Caco-2 (cell line): ENCODE measurements at regions of chr2 and their contacts with region 1.

Region 1: GRCh38 chr2:26577434-26578112 is 63.6 kb downstream of the CIB4 start:
- DNase-seq: peak; percentile 61 to 80
- H3K4me3 ChIP-seq: no peak overlapping the region
- H3K4me3 Mint-ChIP-seq: no peak overlapping the region
- H3K27ac Mint-ChIP-seq: no peak overlapping the region
- H3K4me1 ChIP-seq: peaks cover 9% of the 10 kb centered on the region; the same call in 1 of the 2 replicates
- H3K4me1 Mint-ChIP-seq: no peaks in the 10 kb centered on the region
- H3K27me3 ChIP-seq: no peaks in the 10 kb centered on the region
- H3K27me3 Mint-ChIP-seq: peaks cover 20% of the 10 kb centered on the region
- CTCF ChIP-seq: peak; percentile 98

Region 2: DNA sequence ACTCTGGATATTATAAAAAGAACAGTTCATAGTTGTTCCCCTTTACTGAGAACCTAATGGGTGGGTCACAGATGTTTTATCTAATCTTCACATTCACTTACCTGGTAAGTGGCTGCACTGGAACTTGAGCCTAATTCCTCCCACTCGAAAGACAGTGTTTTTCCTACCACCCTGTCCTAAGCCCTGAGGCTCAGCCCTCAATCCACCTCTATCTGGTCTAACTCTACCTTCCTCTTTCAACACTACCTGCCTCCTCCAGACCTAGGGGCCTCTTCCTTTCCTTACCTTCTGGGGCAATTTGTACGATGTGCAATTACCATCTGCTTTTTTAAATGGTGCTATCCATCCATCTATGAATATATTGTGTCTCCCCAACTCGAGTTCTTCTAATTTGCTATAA is 585.6 kb before region 1 on chr2:
- CTCF ChIA-PET with region 1: no interaction called
- POLR2A ChIA-PET with region 1: no interaction called
- intact Hi-C with region 1: no loop called
- DNase-seq: no peak
- H3K4me3 ChIP-seq: no peak overlapping the region
- H3K4me3 Mint-ChIP-seq: no peak overlapping the region
- H3K27ac Mint-ChIP-seq: peak overlapping the region; percentile 5
- H3K4me1 ChIP-seq: peaks cover 12% of the 10 kb centered on the region
- H3K4me1 Mint-ChIP-seq: peaks cover 23% of the 10 kb centered on the region
- H3K27me3 ChIP-seq: no peaks in the 10 kb centered on the region
- H3K27me3 Mint-ChIP-seq: no peaks in the 10 kb centered on the region
- CTCF ChIP-seq: no peak

Region 3: DNA sequence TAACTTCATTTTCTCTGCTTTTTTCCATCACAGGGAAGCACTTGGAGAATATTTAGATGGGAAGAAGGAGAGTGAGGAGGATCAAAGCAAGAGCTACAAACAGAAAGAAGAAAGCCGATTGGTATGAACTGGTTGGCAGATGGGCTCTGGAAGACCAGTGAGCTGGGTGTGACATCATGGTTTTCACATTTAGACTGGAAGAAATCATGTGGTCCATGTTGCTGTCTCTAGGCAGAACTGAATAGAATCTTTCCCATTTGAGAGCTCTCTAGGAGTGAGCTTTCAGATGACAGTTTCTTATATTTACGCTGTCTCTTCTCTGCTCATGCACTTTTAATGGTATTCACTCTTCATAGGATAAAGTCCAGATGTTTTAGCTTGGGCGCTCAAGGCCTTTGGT is 163.3 kb before region 1 on chr2:
- CTCF ChIA-PET with region 1: no interaction called
- POLR2A ChIA-PET with region 1: no interaction called
- intact Hi-C with region 1: no loop called
- DNase-seq: no peak
- H3K4me3 ChIP-seq: no peak overlapping the region
- H3K4me3 Mint-ChIP-seq: no peak overlapping the region
- H3K27ac Mint-ChIP-seq: no peak overlapping the region
- H3K4me1 ChIP-seq: peaks cover 13% of the 10 kb centered on the region
- H3K4me1 Mint-ChIP-seq: peaks cover 10% of the 10 kb centered on the region
- H3K27me3 ChIP-seq: no peaks in the 10 kb centered on the region
- H3K27me3 Mint-ChIP-seq: no peaks in the 10 kb centered on the region
- CTCF ChIP-seq: no peak

Region 4: DNA sequence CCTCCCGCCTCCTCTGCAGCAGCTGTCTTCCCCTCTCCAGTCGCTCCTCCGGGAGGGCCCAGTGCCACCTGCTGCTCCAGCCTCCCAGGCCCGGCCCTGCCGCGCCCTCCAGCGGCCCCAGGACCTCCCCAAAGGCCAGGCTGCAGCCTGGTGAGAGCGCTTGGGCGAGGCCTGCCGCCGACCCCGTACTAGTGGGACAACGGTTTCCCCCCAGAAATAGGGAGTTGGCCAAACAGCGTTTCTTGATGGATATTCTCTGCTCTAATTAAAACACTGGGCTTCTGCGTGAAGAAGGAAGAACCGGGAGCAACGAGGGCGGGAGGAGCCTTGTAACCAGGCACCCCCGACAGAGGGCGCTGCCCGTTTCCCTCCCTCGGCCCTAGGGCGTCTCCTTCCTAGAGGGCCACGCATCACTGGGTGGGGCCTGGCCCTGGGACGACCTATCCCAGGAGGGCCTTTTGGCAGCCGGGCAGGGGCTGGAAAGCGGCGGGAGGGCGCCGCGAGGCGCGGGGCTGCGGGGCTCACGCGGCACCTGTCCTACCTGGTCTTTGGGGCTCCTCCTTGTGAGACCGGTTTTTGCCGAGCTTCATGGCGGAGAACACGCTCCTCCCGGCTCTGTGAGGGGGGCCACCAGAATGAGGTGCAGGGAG is 74.2 kb before region 1 on chr2:
- CTCF ChIA-PET with region 1: interaction called, 3 read pairs
- POLR2A ChIA-PET with region 1: no interaction called
- intact Hi-C with region 1: loop called (anchors 2 kb)
- DNase-seq: peak; percentile 92 to 93
- H3K4me3 ChIP-seq: peak overlapping the region; percentile 48
- H3K4me3 Mint-ChIP-seq: peak overlapping the region; percentile 78
- H3K27ac Mint-ChIP-seq: peak overlapping the region; percentile 37
- H3K4me1 ChIP-seq: no peaks in the 10 kb centered on the region
- H3K4me1 Mint-ChIP-seq: peaks cover 7% of the 10 kb centered on the region
- H3K27me3 ChIP-seq: no peaks in the 10 kb centered on the region
- H3K27me3 Mint-ChIP-seq: peaks cover 6% of the 10 kb centered on the region
- CTCF ChIP-seq: peak; percentile 84 to 89

Region 5: DNA sequence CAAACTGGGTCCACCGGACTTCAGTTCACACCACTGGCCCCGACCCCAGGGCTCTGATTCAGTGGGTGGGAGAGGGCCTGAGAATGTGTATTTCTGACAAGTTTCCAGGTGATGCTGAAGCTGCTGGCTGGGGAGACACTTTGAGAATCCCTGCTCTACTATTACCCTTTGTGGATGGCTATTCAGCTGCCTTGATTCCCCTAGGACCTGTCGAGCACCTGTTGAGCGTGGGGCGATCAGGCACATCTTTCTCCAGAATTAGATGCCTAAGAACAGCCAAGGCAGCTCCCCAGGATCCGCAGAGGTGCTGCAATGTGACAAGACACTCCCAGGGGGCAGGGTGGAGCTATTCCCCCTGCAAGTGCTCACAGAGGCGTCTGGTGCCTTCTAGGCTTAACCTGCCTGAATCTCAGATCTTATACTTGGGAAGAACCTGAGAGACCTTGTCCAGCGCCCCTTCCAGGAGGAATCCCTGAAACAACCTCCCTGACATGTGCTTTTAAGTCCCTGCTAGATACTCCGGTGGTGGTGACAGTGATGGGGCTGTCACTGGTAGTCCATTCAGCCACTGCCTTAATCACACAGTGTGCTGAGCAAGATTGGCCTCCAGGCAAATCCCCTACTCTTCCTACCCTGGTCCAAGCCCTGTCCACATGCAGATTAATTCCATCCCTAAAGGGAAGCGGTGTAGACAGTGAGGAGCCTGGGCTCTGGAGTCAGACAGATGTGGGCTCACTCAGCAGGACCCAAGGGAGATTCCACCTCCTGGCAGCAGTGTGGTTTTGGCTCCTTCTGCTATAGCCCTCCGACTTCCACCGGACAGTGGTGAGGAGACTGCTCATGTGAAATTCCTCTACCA is 56.3 kb before region 1 on chr2:
- CTCF ChIA-PET with region 1: interaction called, 42 read pairs
- POLR2A ChIA-PET with region 1: no interaction called
- intact Hi-C with region 1: loop called (anchors 1 kb)
- DNase-seq: peak; percentile 60 to 71
- H3K4me3 ChIP-seq: no peak overlapping the region
- H3K4me3 Mint-ChIP-seq: no peak overlapping the region
- H3K27ac Mint-ChIP-seq: no peak overlapping the region
- H3K4me1 ChIP-seq: no peaks in the 10 kb centered on the region
- H3K4me1 Mint-ChIP-seq: no peaks in the 10 kb centered on the region
- H3K27me3 ChIP-seq: no peaks in the 10 kb centered on the region; the same call in 1 of the 2 replicates
- H3K27me3 Mint-ChIP-seq: peaks cover 5% of the 10 kb centered on the region
- CTCF ChIP-seq: peak; percentile 79 to 88

Region 6: GRCh38 chr2:26561918-26562810 is 15.4 kb before region 1 on chr2:
- CTCF ChIA-PET with region 1: interaction called, 10 read pairs
- POLR2A ChIA-PET with region 1: no interaction called
- intact Hi-C with region 1: no loop called
- DNase-seq: peak; percentile 58 to 84
- H3K4me3 ChIP-seq: peak overlapping the region; percentile 41
- H3K4me3 Mint-ChIP-seq: peak overlapping the region; percentile 22
- H3K27ac Mint-ChIP-seq: no peak overlapping the region
- H3K4me1 ChIP-seq: 0 out of 2 replicates have a peak, but pooled peaks cover 4% of the 10 kb centered on the region
- H3K4me1 Mint-ChIP-seq: no peaks in the 10 kb centered on the region
- H3K27me3 ChIP-seq: no peaks in the 10 kb centered on the region
- H3K27me3 Mint-ChIP-seq: peaks cover 26% of the 10 kb centered on the region
- CTCF ChIP-seq: peak; percentile 45 to 57